ENCODE measurements at regions of chr9 and their contacts with region 1.

Region 1: GRCh38 chr9:123401879-123402513 is 46.0 kb downstream of the CRB2 start:
- DNase-seq: peak in 3 of 10 donors; percentile 29 to 65 (median 56)
- H3K4me3 ChIP-seq: no peak overlapping the region
- H3K27ac ChIP-seq: peak overlapping the region in 1 of 59 donors; percentile 7
- H3K27me3 ChIP-seq: no peaks in the 10 kb centered on the region
- CTCF ChIP-seq: peak; percentile 50 to 87 (median 76)

Region 2: DNA sequence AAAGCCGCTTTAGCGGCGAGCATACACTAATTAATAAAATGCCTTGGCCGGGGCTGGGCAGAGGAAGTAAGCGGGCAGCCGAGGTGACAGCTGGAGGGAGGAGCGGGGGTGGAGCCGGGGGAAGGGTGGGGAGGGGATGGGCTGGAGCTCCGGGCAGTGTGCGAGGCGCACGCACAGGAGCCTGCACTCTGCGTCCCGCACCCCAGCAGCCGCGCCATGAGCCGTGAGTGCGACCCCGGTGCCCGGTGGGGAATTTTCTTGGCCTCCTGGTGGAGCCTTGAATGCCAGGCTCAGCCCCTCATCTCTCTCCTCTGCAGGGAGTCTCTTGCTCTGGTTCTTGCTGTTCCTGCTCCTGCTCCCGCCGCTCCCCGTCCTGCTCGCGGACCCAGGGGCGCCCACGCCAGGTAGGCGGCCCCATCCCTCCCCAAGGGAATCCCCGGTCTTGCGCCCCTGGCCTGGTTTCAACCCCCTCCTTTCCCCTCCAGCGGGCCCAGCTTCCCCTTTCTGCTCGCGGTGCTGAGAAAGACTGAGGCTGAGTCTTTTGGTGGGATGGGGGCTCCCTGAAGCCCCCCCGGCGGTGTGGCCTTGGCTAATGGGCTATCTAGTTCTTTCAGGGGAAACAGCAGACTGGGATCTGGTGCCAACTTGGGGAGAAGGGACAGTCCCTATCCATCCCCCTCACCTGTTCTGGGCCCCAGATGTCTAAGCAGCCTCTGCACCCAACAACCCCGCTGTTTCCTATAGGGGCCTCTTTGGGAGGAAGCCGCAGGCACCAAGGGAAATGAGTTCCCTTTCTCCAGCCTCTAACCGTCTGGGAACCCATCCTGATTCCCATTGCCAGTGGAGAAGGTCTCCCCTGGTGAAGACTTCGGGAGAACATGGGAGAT is 1030.9 kb before region 1 on chr9 and contains the start of gene PTGS1:
- intact Hi-C with region 1: no loop called
- DNase-seq: no peak
- H3K4me3 ChIP-seq: peak within 1 kb of the TSS in 53 of 59 donors; percentile 4 to 62 (median 43)
- H3K27ac ChIP-seq: peak within 1 kb of the TSS in 3 of 59 donors; percentile 14 to 57 (median 56)
- H3K27me3 ChIP-seq: peaks cover 0 to 26% (median 9%) of the 10 kb centered on the region in 45 donors
- CTCF ChIP-seq: no peak
- total RNA-seq, gene PTGS1: 1.4 to 17.8 (median 4.7) TPM

Region 3: DNA sequence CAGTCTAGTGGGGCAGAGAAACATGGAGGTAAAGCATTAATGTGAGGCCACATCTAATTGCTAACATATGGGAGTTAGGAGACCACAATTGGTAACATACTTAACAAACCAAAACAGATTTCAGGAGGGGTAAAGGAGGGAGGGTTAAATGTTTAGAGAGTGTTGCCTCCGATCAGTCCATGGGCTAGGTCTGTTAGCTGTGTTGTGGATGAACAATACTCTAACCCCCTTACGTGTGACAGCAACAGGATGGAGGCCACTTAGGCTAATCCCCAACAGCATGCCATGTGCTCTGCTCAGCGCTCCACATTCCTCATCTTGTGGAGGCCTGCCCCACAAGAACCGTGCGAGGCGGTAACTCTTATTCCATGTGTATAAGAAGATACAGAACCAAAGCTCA is 121.0 kb after region 1 on chr9:
- intact Hi-C with region 1: loop called in 1 of 2 experiments (anchors 5 kb)
- DNase-seq: no peak
- H3K4me3 ChIP-seq: no peak overlapping the region
- H3K27ac ChIP-seq: no peak overlapping the region
- H3K27me3 ChIP-seq: no peaks in the 10 kb centered on the region
- CTCF ChIP-seq: no peak

Measured in dorsolateral prefrontal cortex (tissue), 120 donors.